Caco-2 (cell line): ENCODE measurements at regions of chr6 and their contacts with region 1.

Region 1: DNA sequence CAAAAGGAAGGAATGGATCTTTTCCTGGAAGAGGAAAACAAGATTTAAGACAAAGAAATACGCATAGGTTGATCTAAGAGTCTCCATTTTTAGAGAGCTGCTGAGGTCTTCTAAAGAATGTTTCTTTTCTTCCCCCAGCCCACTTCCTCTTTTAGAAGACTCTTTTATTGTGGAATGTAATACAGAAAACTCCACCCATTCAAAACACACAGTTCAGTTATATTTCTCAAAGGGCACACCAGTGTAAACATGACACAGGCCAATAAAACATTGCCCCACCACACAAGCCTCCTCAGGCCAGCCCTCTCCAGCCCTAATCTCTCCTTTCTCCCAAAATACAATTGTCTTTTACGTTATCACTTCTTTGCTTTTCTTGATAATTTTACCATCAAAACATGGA is 42.8 kb downstream of the SLC35B3 start:
- DNase-seq: peak; percentile 60
- H3K4me3 ChIP-seq: no peak overlapping the region
- H3K4me3 Mint-ChIP-seq: peak overlapping the region; percentile 32
- H3K27ac Mint-ChIP-seq: peak overlapping the region; percentile 63
- H3K4me1 ChIP-seq: peaks cover 22% of the 10 kb centered on the region
- H3K4me1 Mint-ChIP-seq: peaks cover 37% of the 10 kb centered on the region
- H3K27me3 ChIP-seq: no peaks in the 10 kb centered on the region
- H3K27me3 Mint-ChIP-seq: no peaks in the 10 kb centered on the region
- CTCF ChIP-seq: no peak

Region 2: DNA sequence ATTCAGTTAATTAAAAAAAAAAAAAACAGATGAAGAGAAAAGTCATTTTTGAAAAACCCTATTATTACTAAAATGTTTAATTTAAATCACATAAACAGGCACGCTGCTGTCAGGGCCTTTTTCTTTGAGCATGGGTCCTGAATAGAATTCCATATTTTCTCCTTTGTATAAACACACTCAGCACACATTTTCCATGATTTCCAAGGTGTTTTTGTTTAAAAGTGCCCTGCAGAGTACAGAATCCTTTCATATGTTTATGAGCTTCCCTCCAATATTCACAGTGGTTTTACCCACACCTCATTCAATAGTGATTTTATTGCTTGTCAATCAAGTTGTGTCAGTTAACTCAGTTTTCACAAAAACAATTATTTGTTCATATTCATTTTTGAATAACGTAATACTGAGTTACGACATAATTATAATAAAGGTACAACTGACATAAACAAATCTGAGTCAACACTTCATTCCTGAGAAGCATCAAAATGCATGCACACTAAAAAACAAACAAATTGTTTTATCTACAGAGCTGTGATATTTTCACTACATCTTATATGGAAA is 27.5 kb after region 1 on chr6:
- CTCF ChIA-PET with region 1: no interaction called
- POLR2A ChIA-PET with region 1: no interaction called
- intact Hi-C with region 1: loop called (anchors 2 kb)
- DNase-seq: no peak
- H3K4me3 ChIP-seq: no peak overlapping the region
- H3K4me3 Mint-ChIP-seq: no peak overlapping the region
- H3K27ac Mint-ChIP-seq: no peak overlapping the region
- H3K4me1 ChIP-seq: peaks cover 17% of the 10 kb centered on the region
- H3K4me1 Mint-ChIP-seq: peaks cover 13% of the 10 kb centered on the region
- H3K27me3 ChIP-seq: no peaks in the 10 kb centered on the region
- H3K27me3 Mint-ChIP-seq: no peaks in the 10 kb centered on the region
- CTCF ChIP-seq: no peak